ENCODE measurements at regions of chr1 and their contacts with region 1.

Region 1: DNA sequence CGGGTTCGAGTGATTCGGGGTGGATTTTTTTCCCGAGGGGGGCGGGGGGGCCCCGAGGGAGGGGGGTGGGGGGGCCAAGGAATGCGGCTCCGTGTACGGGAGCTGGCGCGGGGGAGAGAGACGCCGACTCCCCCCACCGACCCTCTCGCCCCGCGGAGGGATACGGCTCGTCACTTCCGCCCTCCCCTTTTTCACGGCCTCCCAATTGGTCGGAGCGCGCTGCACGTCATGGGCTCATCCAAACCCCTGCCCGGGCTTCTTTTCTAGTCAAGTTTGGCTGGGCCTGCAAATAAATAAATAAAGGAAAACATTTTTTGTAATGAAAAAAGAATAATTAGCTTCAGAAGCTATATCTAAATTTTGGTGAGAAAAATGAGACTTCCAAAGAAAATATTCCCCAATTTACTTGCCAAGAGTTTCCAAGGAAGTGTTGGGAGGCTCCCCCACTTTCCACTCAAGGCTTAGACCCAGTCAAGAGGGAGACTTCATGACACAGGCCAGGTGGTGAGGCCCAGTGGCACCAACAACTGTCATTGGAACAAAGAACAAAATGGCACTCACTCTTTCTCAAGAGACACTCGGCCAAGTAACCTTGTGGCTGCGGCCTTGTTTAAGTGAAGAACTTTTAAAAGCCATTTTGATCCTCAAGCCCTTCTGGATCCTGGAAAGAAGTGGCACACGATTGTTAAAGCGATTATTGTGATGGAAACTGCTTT is at the start of gene POGZ:
- DNase-seq: peak; percentile 83
- ATAC-seq: peak; percentile 88
- H3K4me3 ChIP-seq: peak within 1 kb of the TSS; percentile 71 to 87 (median 75)
- H3K27ac ChIP-seq: peak within 1 kb of the TSS; percentile 81
- H3K4me1 ChIP-seq: peaks cover 38% of the 10 kb centered on the region
- H3K27me3 ChIP-seq: 0 out of 5 replicates have a peak, but pooled peaks cover 0 to 2% of the 10 kb centered on the region in 2 experiments
- CTCF ChIP-seq: no peak
- EP300 ChIP-seq: no peak
- POLR2A ChIP-seq: peak; percentile 42 to 59; a peak in 2 of 4 replicates
- RAD21 ChIP-seq: no peak
- total RNA-seq, gene POGZ: 15.3 and 17.1 TPM in 2 replicates

Region 2: DNA sequence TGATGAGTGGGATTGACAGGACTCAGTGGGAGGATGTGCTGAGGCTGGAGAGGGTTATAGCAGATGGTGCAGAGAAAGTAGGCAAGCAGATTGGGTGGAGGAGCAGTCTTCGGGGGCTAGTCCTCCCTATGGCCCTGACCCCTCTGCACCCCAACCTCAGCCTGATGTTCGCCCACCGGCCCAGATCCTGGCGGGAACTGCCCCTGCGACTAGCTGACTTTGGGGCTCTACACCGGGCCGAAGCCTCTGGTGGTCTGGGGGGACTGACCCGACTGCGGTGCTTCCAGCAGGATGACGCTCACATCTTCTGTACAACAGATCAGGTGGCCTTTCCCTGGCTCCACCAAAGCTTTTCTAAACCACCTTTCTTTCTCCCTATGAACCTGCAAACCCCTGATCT is 961.1 kb before region 1 on chr1:
- CTCF ChIA-PET with region 1: no interaction called
- POLR2A ChIA-PET with region 1: no interaction called
- in situ Hi-C with region 1: no loop called
- intact Hi-C with region 1: no loop called
- DNase-seq: no peak
- ATAC-seq: no peak
- H3K4me3 ChIP-seq: no peak overlapping the region
- H3K27ac ChIP-seq: no peak overlapping the region
- H3K4me1 ChIP-seq: no peaks in the 10 kb centered on the region
- H3K27me3 ChIP-seq: no peaks in the 10 kb centered on the region; a peak in 1 of 5 replicates
- CTCF ChIP-seq: no peak
- EP300 ChIP-seq: no peak
- POLR2A ChIP-seq: no peak
- RAD21 ChIP-seq: no peak

Region 3: GRCh38 chr1:151472856-151473731 is 13.6 kb after region 1 on chr1:
- CTCF ChIA-PET with region 1: no interaction called
- POLR2A ChIA-PET with region 1: interaction called, 19 read pairs
- in situ Hi-C with region 1: no loop called
- intact Hi-C with region 1: loop called (anchors 1 kb)
- DNase-seq: no peak
- ATAC-seq: peak; percentile 59; the same call in 2 of the 3 replicates
- H3K4me3 ChIP-seq: peak overlapping the region; percentile 51 to 56 (median 52); a peak in 5 of 6 replicates
- H3K27ac ChIP-seq: no peak overlapping the region
- H3K4me1 ChIP-seq: peaks cover 11% of the 10 kb centered on the region; the same call in 1 of the 2 replicates
- H3K27me3 ChIP-seq: no peaks in the 10 kb centered on the region; a peak in 1 of 5 replicates
- CTCF ChIP-seq: no peak
- EP300 ChIP-seq: no peak
- POLR2A ChIP-seq: no peak
- RAD21 ChIP-seq: no peak